Uterus (tissue), 4 donors: ENCODE measurements at regions of chr21 and their contacts with region 1.

Region 1: DNA sequence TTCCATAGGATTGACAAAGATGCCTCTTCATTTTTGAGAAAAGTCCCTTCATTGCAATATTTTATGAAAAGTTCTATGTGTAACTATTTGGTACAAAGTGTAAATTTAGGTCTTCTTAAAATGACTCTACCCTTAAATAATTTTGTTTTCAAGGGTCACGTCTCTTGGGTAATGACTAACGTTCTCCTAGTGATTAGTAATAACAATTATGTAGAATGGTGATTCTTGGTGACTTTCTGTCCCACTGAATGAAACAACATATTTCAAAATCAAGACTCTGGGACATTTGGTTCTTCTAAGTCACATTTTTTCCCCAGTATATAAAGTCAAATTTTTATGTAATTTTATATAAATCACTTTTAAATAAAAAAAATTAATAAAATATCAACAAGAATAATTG is 277.5 kb upstream of the ADAMTS5 start:
- DNase-seq: no peak
- H3K4me3 ChIP-seq: no peak overlapping the region
- H3K27ac ChIP-seq: peak overlapping the region in 1 of 2 donors; percentile 58
- H3K4me1 ChIP-seq: no peaks in the 10 kb centered on the region
- H3K27me3 ChIP-seq: no peaks in the 10 kb centered on the region
- CTCF ChIP-seq: no peak
- POLR2A ChIP-seq: no peak

Region 2: DNA sequence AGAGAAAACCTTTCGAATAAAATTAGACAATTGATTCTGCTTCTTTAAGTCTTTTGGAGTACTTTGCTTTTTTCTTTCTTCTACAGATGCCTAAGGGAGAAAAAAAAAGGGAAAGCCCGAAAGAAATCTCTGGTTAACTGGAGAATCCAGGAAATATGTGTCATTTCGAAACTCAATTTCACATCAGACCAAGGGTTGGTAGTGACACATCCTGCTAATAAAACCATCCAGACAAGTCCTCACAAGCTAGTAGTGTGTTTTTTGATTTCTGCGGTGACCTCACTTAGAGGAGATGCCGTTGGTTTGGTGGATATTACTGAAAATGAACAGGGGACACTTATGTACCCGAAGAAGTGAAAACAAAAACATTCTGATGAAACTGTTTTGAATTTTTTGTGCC is 449.0 kb after region 1 on chr21:
- intact Hi-C with region 1: loop called (anchors 5 kb)
- DNase-seq: no peak
- H3K4me3 ChIP-seq: no peak overlapping the region
- H3K27ac ChIP-seq: no peak overlapping the region
- H3K4me1 ChIP-seq: no peaks in the 10 kb centered on the region
- H3K27me3 ChIP-seq: no peaks in the 10 kb centered on the region
- CTCF ChIP-seq: no peak
- POLR2A ChIP-seq: no peak